Caco-2 (cell line): ENCODE measurements at regions of chr10 and their contacts with region 1.

Region 1: DNA sequence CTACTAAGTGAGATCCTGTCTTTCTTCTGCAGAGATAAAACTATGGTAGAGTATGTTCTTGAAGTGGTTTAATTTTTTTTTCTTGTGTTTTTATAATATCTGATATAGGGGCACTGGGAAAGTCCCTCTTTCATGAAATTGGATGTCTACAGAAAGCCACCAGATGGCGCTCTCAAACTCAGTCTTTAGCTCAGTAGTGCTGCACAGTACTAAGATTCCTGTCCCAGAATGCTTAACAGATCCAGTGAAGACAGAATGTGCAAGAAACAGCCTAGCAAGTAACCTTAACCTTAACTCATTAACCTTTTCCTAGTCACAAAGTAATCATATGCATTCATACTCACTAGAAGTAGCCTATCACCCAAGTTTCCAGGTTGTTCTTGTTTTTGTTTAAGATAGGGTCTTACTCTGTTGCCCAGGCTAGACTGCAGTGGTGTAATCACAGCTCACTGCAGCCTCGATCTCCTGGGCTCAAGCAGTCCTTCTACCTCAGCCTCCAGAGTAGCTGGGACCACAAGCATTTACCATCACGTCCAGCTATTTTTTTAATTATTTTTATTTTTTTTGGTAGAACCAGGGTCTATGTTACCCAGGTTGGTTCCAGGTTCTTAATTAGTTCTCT is 56.7 kb downstream of the IDE start:
- DNase-seq: peak; percentile 61 to 67
- H3K4me3 ChIP-seq: no peak overlapping the region
- H3K4me3 Mint-ChIP-seq: no peak overlapping the region
- H3K27ac Mint-ChIP-seq: no peak overlapping the region
- H3K4me1 ChIP-seq: no peaks in the 10 kb centered on the region
- H3K4me1 Mint-ChIP-seq: no peaks in the 10 kb centered on the region
- H3K27me3 ChIP-seq: no peaks in the 10 kb centered on the region
- H3K27me3 Mint-ChIP-seq: no peaks in the 10 kb centered on the region
- CTCF ChIP-seq: peak; percentile 77 to 80

Region 2: GRCh38 chr10:92573798-92574547 is 56.8 kb after region 1 on chr10 and contains the start of gene IDE:
- CTCF ChIA-PET with region 1: interaction called, 85 read pairs
- POLR2A ChIA-PET with region 1: interaction called, 8 read pairs
- intact Hi-C with region 1: loop called (anchors 1 kb)
- DNase-seq: peak; percentile 91 to 93
- H3K4me3 ChIP-seq: peak within 1 kb of the TSS; percentile 69
- H3K4me3 Mint-ChIP-seq: peak within 1 kb of the TSS; percentile 81
- H3K27ac Mint-ChIP-seq: peak within 1 kb of the TSS; percentile 74
- H3K4me1 ChIP-seq: peaks cover 22% of the 10 kb centered on the region
- H3K4me1 Mint-ChIP-seq: peaks cover 30% of the 10 kb centered on the region
- H3K27me3 ChIP-seq: no peaks in the 10 kb centered on the region
- H3K27me3 Mint-ChIP-seq: no peaks in the 10 kb centered on the region
- CTCF ChIP-seq: peak; percentile 82 to 94
- total RNA-seq, gene IDE: 84.8 and 85.5 TPM in 2 replicates